ENCODE measurements at regions of chr6 and their contacts with region 1.

Region 1: DNA sequence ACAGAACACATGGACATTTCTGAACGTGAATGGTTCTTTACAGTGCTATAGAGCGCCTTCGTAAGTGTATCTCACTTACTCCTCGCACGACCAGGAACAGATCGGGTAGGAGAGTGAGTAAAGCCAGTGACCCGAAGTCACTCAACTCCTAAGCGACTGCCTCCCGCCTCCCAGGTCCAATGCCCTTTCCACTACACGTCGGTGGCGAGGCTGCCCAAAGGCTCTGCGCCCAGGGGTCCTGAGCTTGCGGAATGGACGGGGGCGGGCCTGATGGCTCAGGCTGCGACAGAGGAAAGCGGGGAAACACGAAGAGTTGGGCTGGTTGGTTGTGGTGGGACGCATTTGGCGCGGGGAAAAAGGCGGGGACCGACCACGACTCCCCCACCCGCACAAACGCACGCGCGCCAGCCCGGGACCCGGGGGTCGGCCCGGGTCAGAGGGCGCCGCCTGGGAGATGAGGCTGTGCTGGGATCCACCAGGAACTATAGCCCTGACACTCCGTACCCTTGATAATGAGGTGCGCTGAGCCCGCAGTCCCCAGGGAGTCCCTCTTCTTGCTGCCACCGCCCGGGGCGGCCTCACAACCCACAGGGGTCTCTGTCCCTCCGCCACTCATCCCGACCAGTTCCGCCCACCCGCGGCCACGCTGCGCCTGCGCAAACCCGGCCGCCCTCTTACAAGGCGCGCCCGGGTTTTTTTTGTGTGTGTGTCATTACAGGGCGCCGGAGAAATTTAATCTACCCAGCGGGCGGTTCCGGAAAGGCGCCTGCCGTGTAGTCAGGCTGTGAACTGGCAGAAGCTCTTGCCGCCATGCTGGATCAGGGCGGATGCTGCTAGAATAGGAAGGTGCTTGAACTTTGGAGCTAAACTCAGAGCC is at the start of gene BLOC1S5:
- DNase-seq: peak; percentile 98
- H3K4me3 Mint-ChIP-seq: peak within 1 kb of the TSS; percentile 94
- H3K27ac Mint-ChIP-seq: peak within 1 kb of the TSS; percentile 96
- H3K4me1 Mint-ChIP-seq: peaks cover 24% of the 10 kb centered on the region
- H3K27me3 Mint-ChIP-seq: no peaks in the 10 kb centered on the region
- total RNA-seq, gene BLOC1S5: 18.3 to 23.8 TPM

Region 2: GRCh38 chr6:7312616-7313504 is 751.1 kb before region 1 on chr6 and contains the start of gene SSR1:
- CTCF ChIA-PET with region 1: interaction called, 5 read pairs
- POLR2A ChIA-PET with region 1: no interaction called
- intact Hi-C with region 1: loop called (anchors 1 kb)
- DNase-seq: peak; percentile 97
- H3K4me3 Mint-ChIP-seq: peak within 1 kb of the TSS; percentile 92
- H3K27ac Mint-ChIP-seq: peak within 1 kb of the TSS; percentile 95
- H3K4me1 Mint-ChIP-seq: peaks cover 40% of the 10 kb centered on the region
- H3K27me3 Mint-ChIP-seq: no peaks in the 10 kb centered on the region
- total RNA-seq, gene SSR1: 156 to 164 TPM

Region 3: DNA sequence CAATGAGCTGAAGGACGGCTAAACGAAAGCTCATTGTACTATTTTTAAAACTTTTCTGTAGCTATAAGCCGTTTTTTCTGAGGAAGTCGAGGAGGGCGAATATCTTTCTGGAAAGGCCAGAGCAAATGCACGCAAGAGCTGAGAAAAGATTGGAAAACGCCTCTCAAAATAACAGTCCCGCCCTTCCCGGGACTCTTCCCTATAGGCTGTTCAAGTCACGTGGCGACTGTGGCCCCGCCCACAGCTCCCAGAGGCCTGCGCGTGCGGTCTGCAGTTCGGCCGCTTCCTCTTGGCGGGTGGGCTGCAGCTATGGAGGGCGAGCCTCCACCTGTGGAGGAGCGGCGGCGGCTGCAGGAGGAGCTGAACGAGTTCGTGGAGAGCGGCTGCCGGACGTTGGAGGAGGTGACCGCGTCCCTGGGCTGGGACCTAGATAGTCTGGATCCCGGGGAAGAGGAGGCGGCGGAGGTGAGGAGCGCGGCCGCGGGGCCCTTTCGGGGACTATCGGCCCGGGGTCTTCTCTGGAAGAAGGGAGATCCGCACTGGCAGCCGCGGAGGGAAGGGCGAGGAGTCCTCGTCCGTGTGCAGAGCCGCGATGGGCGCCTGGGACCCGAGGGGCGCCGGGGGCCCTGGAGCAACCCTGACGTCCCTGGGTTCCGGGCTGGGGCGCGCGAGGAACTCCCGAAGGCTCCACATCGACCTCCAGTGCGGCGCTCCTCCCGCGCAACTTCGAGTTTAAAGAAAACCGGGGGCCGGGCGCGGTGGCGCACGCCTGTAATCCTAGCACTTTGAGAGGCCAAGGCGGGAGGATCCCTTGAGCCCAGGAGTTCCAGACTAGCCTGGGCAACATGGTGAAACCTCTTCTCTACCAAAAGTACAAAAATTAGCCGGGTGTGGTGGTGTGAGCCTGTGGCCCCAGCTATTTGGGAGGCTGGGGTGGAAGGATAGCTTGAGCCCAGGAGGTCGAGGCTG is 473.8 kb before region 1 on chr6 and contains the start of gene SNRNP48:
- CTCF ChIA-PET with region 1: no interaction called
- POLR2A ChIA-PET with region 1: no interaction called
- intact Hi-C with region 1: loop called (anchors 1 kb)
- DNase-seq: peak; percentile 95
- H3K4me3 Mint-ChIP-seq: peak within 1 kb of the TSS; percentile 99
- H3K27ac Mint-ChIP-seq: peak within 1 kb of the TSS; percentile 94
- H3K4me1 Mint-ChIP-seq: peaks cover 40% of the 10 kb centered on the region
- H3K27me3 Mint-ChIP-seq: no peaks in the 10 kb centered on the region
- total RNA-seq, gene SNRNP48: 21.1 to 21.8 TPM

Region 4: DNA sequence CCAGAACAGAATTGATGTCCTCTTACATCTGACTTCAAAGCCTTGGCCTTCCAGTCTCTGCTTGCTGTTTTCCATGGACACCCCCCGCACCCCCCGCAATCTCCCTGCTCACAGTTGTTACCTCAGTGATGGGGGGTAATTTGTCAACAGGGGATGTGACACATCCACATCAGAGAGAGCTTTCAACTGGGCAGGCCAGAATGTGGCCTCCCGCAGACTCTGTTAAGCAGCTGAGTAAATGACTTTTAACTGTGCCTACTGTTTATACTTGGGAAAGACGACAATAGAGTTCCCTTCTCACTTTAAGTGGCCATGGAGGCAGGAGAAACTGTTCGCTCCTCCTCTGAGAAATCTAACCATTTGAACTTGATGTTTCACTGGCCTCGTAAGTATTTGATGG is 204.4 kb before region 1 on chr6:
- CTCF ChIA-PET with region 1: no interaction called
- POLR2A ChIA-PET with region 1: no interaction called
- intact Hi-C with region 1: no loop called
- DNase-seq: no peak
- H3K4me3 Mint-ChIP-seq: no peak overlapping the region
- H3K27ac Mint-ChIP-seq: no peak overlapping the region
- H3K4me1 Mint-ChIP-seq: no peaks in the 10 kb centered on the region
- H3K27me3 Mint-ChIP-seq: peaks cover 3% of the 10 kb centered on the region

Region 5: DNA sequence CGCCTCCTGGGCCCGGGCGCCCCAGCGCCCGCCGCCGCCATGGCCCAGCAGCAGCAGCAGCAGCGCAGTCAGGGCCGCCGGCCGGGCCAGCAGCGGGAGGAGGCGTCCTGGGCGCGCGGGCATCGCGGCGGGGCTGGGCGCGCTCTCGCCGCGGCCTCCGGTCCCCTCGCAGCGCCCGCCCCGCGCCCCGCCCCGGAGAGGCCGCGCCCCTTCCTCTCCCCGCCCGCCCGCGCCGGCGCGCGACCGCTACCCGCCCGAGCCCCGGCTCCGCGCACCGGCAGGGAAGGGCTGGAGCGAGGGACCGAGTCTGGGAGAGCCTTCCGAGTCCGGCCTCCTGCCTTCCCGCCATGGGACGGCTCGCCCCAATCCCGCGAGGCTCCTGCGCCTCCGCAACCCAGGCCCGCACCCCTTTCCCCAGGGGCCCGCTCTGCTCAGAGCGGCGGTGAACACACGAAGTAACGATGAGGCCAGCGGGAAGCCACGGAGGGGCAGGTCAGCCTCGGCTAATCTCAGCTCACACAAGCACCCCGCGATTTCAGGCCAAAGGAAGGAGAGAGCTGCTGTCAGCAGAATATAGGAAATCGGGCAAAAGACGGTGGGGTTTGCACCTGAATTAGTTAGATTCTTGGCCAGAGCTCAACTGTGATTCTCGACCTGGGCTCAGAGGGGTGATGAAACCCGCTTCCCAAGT is 153.2 kb before region 1 on chr6 and contains the start of gene TXNDC5:
- CTCF ChIA-PET with region 1: interaction called, 5 read pairs
- POLR2A ChIA-PET with region 1: interaction called, 3 read pairs
- intact Hi-C with region 1: loop called (anchors 2 kb)
- DNase-seq: peak; percentile 77
- H3K4me3 Mint-ChIP-seq: peak within 1 kb of the TSS; percentile 77
- H3K27ac Mint-ChIP-seq: no peak within 1 kb of the TSS
- H3K4me1 Mint-ChIP-seq: peaks cover 18% of the 10 kb centered on the region
- H3K27me3 Mint-ChIP-seq: peaks cover 1% of the 10 kb centered on the region
- total RNA-seq, gene TXNDC5: 59.6 to 64.5 TPM

Region 6: GRCh38 chr6:8102122-8102958 is 38.3 kb after region 1 on chr6 and contains the start of gene EEF1E1:
- CTCF ChIA-PET with region 1: interaction called, 19 read pairs
- POLR2A ChIA-PET with region 1: interaction called, 38 read pairs
- intact Hi-C with region 1: loop called (anchors 1 kb)
- DNase-seq: peak; percentile 99
- H3K4me3 Mint-ChIP-seq: peak within 1 kb of the TSS; percentile 87
- H3K27ac Mint-ChIP-seq: peak within 1 kb of the TSS; percentile 81
- H3K4me1 Mint-ChIP-seq: peaks cover 32% of the 10 kb centered on the region
- H3K27me3 Mint-ChIP-seq: peaks cover 14% of the 10 kb centered on the region
- total RNA-seq, gene EEF1E1: 60.9 to 62.5 TPM

Region 7: GRCh38 chr6:8435160-8435852 is 371.3 kb after region 1 on chr6 and contains the start of gene SLC35B3:
- CTCF ChIA-PET with region 1: no interaction called
- POLR2A ChIA-PET with region 1: no interaction called
- intact Hi-C with region 1: loop called (anchors 1 kb)
- DNase-seq: peak; percentile 98
- H3K4me3 Mint-ChIP-seq: peak within 1 kb of the TSS; percentile 93
- H3K27ac Mint-ChIP-seq: peak within 1 kb of the TSS; percentile 96
- H3K4me1 Mint-ChIP-seq: peaks cover 28% of the 10 kb centered on the region
- H3K27me3 Mint-ChIP-seq: no peaks in the 10 kb centered on the region
- total RNA-seq, gene SLC35B3: 7.6 to 7.9 TPM